Activated CD4-positive, alpha-beta T cell treated with anti-CD3 and anti-CD28 coated beads for 36 hours (primary cell): ENCODE measurements at regions of chr4 and their contacts with region 1.

Region 1: DNA sequence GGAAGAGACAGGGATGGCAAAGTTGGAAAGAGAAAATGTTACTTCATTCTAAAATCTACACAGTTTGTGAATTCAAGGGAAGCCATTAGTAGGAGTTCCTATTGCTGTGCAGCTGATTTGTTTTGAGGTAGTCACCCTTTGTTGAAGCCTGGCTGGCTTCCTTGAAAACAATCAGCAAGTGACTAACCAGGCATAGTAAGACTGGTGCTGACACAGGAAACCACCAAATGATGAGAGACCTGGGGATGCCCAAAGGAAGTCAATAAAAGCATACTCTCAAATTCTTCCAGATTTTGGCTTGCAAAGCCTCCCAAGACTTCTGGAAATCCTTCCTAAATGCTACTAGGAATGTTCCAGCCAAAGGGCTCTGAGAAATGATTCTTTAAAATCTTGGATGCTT is 23.9 kb upstream of the PRDM8 start:
- DNase-seq: peak; percentile 72
- ATAC-seq: peak; percentile 91
- H3K4me3 Mint-ChIP-seq: peak overlapping the region; percentile 43
- H3K27ac Mint-ChIP-seq: peak overlapping the region; percentile 79
- H3K4me1 Mint-ChIP-seq: peaks cover 51% of the 10 kb centered on the region
- H3K27me3 Mint-ChIP-seq: no peaks in the 10 kb centered on the region

Region 2: DNA sequence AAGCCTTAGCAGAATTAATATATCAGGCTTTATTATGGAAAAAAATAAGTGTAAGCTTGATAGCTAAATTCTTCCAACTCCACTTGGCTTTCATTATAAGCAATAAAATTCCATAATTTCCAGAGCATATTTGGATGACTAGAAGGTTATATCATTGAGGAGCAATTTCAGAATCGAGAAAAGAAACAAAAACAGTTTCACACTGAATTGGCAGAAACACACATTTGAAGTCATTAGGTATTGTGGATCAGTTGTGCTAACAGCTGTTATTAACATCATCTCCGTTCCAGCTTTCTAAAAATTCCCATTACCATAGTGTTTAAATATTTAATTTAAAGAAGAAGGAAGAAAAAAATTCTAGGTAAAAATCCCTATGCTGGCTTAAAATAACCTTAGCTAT is 193.0 kb before region 1 on chr4:
- CTCF ChIA-PET with region 1: no interaction called
- POLR2A ChIA-PET with region 1: no interaction called
- intact Hi-C with region 1: no loop called
- DNase-seq: no peak
- ATAC-seq: no peak
- H3K4me3 Mint-ChIP-seq: no peak overlapping the region
- H3K27ac Mint-ChIP-seq: no peak overlapping the region
- H3K4me1 Mint-ChIP-seq: peaks cover 3% of the 10 kb centered on the region
- H3K27me3 Mint-ChIP-seq: no peaks in the 10 kb centered on the region

Region 3: DNA sequence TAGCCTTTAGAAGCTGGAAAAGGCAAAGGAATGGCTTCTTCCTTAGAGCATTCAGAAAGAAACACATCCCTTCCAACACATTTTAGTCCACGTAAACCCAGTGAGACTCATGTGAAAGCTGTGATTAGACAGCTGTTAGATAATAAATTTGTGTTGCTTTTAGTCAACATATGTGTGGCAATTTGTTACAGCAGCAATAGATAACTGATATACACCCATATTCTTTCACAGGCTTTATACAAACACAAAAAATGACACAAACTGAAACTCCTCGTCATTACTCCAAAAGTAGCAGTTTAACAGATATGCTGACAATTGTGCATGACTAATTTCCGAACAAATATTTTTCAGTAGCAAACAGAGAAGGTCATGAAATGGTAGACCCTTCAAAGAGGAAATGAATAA is 165.7 kb before region 1 on chr4:
- CTCF ChIA-PET with region 1: no interaction called
- POLR2A ChIA-PET with region 1: no interaction called
- intact Hi-C with region 1: loop called in 1 of 2 experiments (anchors 2 kb)
- DNase-seq: no peak
- ATAC-seq: peak; percentile 68
- H3K4me3 Mint-ChIP-seq: no peak overlapping the region
- H3K27ac Mint-ChIP-seq: peak overlapping the region; percentile 67
- H3K4me1 Mint-ChIP-seq: peaks cover 43% of the 10 kb centered on the region
- H3K27me3 Mint-ChIP-seq: no peaks in the 10 kb centered on the region

Region 4: DNA sequence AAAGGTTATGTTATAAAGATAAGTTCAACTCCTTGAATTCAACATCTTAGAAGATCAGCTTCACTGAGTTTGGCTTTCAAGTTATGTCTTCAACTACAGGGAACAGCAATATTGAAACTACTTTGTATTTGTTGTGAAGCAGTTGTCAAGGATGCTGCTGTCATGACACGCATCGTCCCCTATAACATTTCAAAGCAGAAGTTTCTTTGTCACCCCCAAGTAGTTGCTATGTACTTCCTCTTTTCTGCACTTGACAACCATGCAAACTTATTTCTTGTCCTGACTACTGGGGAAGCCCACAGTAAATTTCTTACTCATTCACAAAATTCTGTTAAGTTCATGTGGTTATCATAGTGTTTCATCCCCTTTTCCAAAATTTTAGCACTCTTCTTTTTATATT is 114.7 kb before region 1 on chr4:
- CTCF ChIA-PET with region 1: interaction called, 3 read pairs
- POLR2A ChIA-PET with region 1: no interaction called
- intact Hi-C with region 1: loop called in 1 of 2 experiments (anchors 1 kb)
- DNase-seq: peak; percentile 59
- ATAC-seq: peak; percentile 86
- H3K4me3 Mint-ChIP-seq: peak overlapping the region; percentile 68
- H3K27ac Mint-ChIP-seq: peak overlapping the region; percentile 89
- H3K4me1 Mint-ChIP-seq: peaks cover 54% of the 10 kb centered on the region
- H3K27me3 Mint-ChIP-seq: no peaks in the 10 kb centered on the region

Region 5: DNA sequence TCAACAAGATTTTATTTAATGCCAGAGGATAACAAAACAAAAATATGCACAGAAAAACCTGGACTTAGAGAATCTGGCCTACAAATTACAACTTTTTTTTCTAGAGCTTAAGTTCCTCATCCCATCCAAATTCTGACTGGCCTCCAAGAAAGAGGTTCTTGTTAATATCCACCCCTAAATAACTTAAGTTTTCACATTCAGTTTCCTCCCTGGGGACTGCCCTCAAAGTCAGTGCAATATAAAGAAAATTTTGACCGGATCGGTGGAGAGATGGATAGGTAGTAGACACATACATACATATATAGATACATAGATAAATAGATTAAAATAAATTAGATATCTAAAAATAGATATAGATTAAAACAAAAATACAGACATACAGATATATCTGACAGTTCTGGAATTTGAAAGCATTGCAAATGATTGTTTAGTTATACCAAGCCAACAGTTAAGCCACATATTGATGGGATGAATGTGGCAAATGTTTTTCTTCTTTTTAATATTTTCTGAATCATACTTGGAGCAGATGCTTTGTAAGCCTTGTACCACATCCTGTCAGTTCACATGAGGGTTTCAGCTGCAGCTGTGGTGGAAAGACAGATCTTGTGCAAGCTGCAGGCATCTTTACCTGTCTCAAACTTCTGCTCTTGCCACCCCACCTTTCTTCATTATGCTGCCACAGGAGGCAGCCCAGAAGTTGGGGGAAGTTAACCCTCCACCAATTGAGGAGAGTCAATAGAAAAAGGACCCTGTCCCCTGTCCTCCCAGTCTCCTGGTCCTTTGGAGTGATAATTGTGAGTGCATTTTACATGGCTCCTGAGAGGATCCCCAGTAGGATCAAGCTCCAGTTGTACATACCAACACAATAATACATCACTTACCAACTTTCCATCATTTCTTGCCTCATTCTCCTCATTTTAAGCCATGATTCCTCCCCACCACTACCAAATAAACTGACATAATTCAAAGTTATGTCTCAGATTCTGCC is 34.6 kb before region 1 on chr4:
- CTCF ChIA-PET with region 1: interaction called, 11 read pairs
- POLR2A ChIA-PET with region 1: no interaction called
- intact Hi-C with region 1: loop called (anchors 1 to 2 kb)
- DNase-seq: peak; percentile 74
- ATAC-seq: peak; percentile 95
- H3K4me3 Mint-ChIP-seq: no peak overlapping the region
- H3K27ac Mint-ChIP-seq: peak overlapping the region; percentile 71
- H3K4me1 Mint-ChIP-seq: peaks cover 58% of the 10 kb centered on the region
- H3K27me3 Mint-ChIP-seq: no peaks in the 10 kb centered on the region

Region 6: GRCh38 chr4:80153874-80154544 is 19.4 kb before region 1 on chr4:
- CTCF ChIA-PET with region 1: interaction called, 19 read pairs
- POLR2A ChIA-PET with region 1: interaction called, 3 read pairs
- intact Hi-C with region 1: loop called (anchors 1 kb)
- DNase-seq: no peak
- ATAC-seq: peak; percentile 89
- H3K4me3 Mint-ChIP-seq: no peak overlapping the region
- H3K27ac Mint-ChIP-seq: peak overlapping the region; percentile 67
- H3K4me1 Mint-ChIP-seq: peaks cover 28% of the 10 kb centered on the region
- H3K27me3 Mint-ChIP-seq: no peaks in the 10 kb centered on the region

Region 7: GRCh38 chr4:80161413-80162058 is 11.9 kb before region 1 on chr4:
- CTCF ChIA-PET with region 1: interaction called, 19 read pairs
- POLR2A ChIA-PET with region 1: no interaction called
- intact Hi-C with region 1: no loop called
- DNase-seq: no peak
- ATAC-seq: no peak
- H3K4me3 Mint-ChIP-seq: no peak overlapping the region
- H3K27ac Mint-ChIP-seq: no peak overlapping the region
- H3K4me1 Mint-ChIP-seq: peaks cover 5% of the 10 kb centered on the region
- H3K27me3 Mint-ChIP-seq: no peaks in the 10 kb centered on the region